ENCODE measurements at regions of chr4 and their contacts with region 1.

Region 1: GRCh38 chr4:113394730-113395530 is 345.5 kb downstream of the ANK2 start:
- DNase-seq: peak in 8 of 9 experiments; percentile 1 to 80 (median 48)
- ATAC-seq: peak; percentile 78
- H3K4me3 ChIP-seq: no peak overlapping the region
- H3K4me3 Mint-ChIP-seq: no peak overlapping the region
- H3K27ac ChIP-seq: no peak overlapping the region
- H3K27ac Mint-ChIP-seq: no peak overlapping the region
- H3K4me1 ChIP-seq: no peaks in the 10 kb centered on the region
- H3K4me1 Mint-ChIP-seq: no peaks in the 10 kb centered on the region
- H3K27me3 ChIP-seq: peaks cover 0 to 6% of the 10 kb centered on the region in 2 experiments
- H3K27me3 Mint-ChIP-seq: peaks cover 2% of the 10 kb centered on the region
- CTCF ChIP-seq: peak; percentile 92

Region 2: GRCh38 chr4:113069212-113069892 is 325.6 kb before region 1 on chr4:
- CTCF ChIA-PET with region 1: no interaction called
- POLR2A ChIA-PET with region 1: no interaction called
- intact Hi-C with region 1: no loop called
- DNase-seq: no peak
- ATAC-seq: no peak
- H3K4me3 ChIP-seq: no peak overlapping the region
- H3K4me3 Mint-ChIP-seq: no peak overlapping the region
- H3K27ac ChIP-seq: no peak overlapping the region
- H3K27ac Mint-ChIP-seq: no peak overlapping the region
- H3K4me1 ChIP-seq: no peaks in the 10 kb centered on the region
- H3K4me1 Mint-ChIP-seq: no peaks in the 10 kb centered on the region
- H3K27me3 ChIP-seq: no peaks in the 10 kb centered on the region
- H3K27me3 Mint-ChIP-seq: peaks cover 7% of the 10 kb centered on the region
- CTCF ChIP-seq: no peak

Region 3: DNA sequence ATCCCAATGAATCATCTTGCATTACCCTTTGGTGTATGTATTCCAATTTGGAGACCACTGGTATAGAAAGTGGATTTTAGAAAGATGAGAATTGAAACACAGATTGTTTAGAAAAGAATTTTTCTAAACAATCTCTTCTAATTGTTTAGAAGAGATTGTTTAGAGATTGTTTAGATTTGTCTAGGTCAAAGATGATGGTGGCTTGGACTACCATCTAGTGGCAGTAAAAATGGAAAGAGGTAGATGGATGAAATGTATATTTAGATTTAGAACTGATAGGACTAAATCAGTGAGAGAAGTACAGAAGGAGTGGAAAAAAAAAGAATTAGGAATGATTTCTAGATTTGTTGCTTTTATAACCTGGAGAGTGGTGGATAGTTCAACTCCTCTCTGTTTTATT is 513.9 kb after region 1 on chr4:
- CTCF ChIA-PET with region 1: no interaction called
- POLR2A ChIA-PET with region 1: no interaction called
- intact Hi-C with region 1: loop called (anchors 1 to 2 kb)
- DNase-seq: peak in 2 of 9 experiments; percentile 29 to 47
- ATAC-seq: no peak
- H3K4me3 ChIP-seq: no peak overlapping the region
- H3K4me3 Mint-ChIP-seq: no peak overlapping the region
- H3K27ac ChIP-seq: no peak overlapping the region
- H3K27ac Mint-ChIP-seq: peak overlapping the region; percentile 2
- H3K4me1 ChIP-seq: peaks cover 26% of the 10 kb centered on the region
- H3K4me1 Mint-ChIP-seq: peaks cover 32% of the 10 kb centered on the region
- H3K27me3 ChIP-seq: no peaks in the 10 kb centered on the region
- H3K27me3 Mint-ChIP-seq: no peaks in the 10 kb centered on the region
- CTCF ChIP-seq: no peak

Region 4: DNA sequence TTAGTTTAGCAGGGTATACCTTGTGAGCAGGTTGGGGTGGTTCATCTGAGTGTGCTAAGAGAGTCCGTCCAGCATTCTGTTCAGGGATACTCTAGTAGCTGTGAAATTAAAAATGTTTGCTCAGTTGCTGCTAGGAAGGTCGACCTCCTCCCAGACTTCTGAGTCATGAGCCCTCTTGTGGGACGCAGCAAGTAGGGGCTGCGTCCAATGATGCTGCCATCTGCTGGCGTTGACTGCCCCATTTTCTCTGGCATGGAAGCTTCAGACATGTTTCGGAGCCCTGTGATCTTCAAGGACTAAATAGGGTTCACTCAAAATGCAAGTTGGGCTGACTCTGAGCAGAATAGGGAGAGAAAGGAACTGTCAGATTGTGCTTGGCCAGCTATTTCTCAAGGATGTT is 785.6 kb after region 1 on chr4:
- CTCF ChIA-PET with region 1: interaction called, 13 read pairs
- POLR2A ChIA-PET with region 1: no interaction called
- intact Hi-C with region 1: loop called (anchors 1 to 2 kb)
- DNase-seq: peak in 8 of 9 experiments; percentile 9 to 63 (median 46)
- ATAC-seq: peak; percentile 29
- H3K4me3 ChIP-seq: no peak overlapping the region
- H3K4me3 Mint-ChIP-seq: no peak overlapping the region
- H3K27ac ChIP-seq: no peak overlapping the region
- H3K27ac Mint-ChIP-seq: no peak overlapping the region
- H3K4me1 ChIP-seq: no peaks in the 10 kb centered on the region
- H3K4me1 Mint-ChIP-seq: no peaks in the 10 kb centered on the region
- H3K27me3 ChIP-seq: no peaks in the 10 kb centered on the region
- H3K27me3 Mint-ChIP-seq: no peaks in the 10 kb centered on the region
- CTCF ChIP-seq: no peak

Region 5: GRCh38 chr4:114659386-114660008 is 1264.6 kb after region 1 on chr4:
- CTCF ChIA-PET with region 1: interaction called, 3 read pairs
- POLR2A ChIA-PET with region 1: no interaction called
- intact Hi-C with region 1: loop called in 1 of 2 experiments (anchors 1 kb)
- DNase-seq: peak in 5 of 9 experiments; percentile 1 to 52 (median 11)
- ATAC-seq: no peak
- H3K4me3 ChIP-seq: no peak overlapping the region
- H3K4me3 Mint-ChIP-seq: no peak overlapping the region
- H3K27ac ChIP-seq: no peak overlapping the region
- H3K27ac Mint-ChIP-seq: no peak overlapping the region
- H3K4me1 ChIP-seq: no peaks in the 10 kb centered on the region
- H3K4me1 Mint-ChIP-seq: no peaks in the 10 kb centered on the region
- H3K27me3 ChIP-seq: no peaks in the 10 kb centered on the region
- H3K27me3 Mint-ChIP-seq: peaks cover 5% of the 10 kb centered on the region
- CTCF ChIP-seq: no peak

Region 6: GRCh38 chr4:114807759-114808404 is 1413.0 kb after region 1 on chr4:
- CTCF ChIA-PET with region 1: interaction called, 8 read pairs
- POLR2A ChIA-PET with region 1: no interaction called
- intact Hi-C with region 1: loop called (anchors 2 to 5 kb)
- DNase-seq: peak in 4 of 9 experiments; percentile 8 to 28 (median 21)
- ATAC-seq: peak; percentile 83
- H3K4me3 ChIP-seq: no peak overlapping the region
- H3K4me3 Mint-ChIP-seq: no peak overlapping the region
- H3K27ac ChIP-seq: no peak overlapping the region
- H3K27ac Mint-ChIP-seq: no peak overlapping the region
- H3K4me1 ChIP-seq: no peaks in the 10 kb centered on the region
- H3K4me1 Mint-ChIP-seq: no peaks in the 10 kb centered on the region
- H3K27me3 ChIP-seq: no peaks in the 10 kb centered on the region
- H3K27me3 Mint-ChIP-seq: no peaks in the 10 kb centered on the region
- CTCF ChIP-seq: peak; percentile 66